HepG2 (cell line): ENCODE measurements at regions of chr4 and their contacts with region 1.

Region 1: DNA sequence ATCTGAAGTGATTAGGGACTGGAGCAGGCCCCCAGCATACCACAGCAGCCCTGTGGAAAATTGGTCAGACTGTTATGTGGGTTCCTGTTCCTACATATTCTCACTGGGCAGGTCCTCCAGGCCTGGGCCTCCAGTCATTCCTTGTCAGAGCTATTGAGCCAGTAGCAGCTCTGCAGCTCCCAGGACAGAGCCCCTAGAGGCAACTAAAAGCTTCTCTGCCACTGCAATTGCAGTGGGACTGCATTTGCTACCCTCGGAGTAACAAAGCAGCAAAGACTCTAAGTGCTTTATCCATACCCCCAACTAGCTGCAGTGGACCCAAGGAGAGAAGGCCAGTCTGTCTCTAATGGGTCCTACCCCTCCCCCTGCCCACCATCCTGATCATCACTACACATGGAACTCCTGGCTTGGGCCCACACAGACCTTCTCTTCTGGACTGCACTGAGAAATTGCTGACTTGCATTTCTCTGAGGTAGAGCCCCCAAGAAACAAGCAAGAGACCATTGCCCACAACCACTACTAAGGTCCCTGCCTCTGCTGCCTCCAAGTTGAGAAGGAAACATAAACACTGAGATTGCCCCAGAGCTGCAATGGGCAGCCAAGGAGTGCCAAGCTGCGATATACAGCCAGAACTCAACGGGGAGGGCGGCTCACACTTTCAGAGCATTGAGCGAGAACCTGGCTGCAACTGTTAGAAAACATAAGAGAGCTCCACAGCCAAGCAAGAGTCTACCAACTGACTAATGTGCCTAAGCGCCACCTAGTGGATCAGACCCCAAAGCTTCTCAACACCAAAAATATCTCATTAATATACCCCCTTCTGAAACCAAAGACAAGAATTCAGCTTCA is 738.7 kb upstream of the NDST4 start:
- DNase-seq: peak; percentile 53
- ATAC-seq: peak; percentile 94
- H3K4me3 ChIP-seq: no peak overlapping the region
- H3K27ac ChIP-seq: no peak overlapping the region
- H3K4me1 ChIP-seq: no peaks in the 10 kb centered on the region
- H3K27me3 ChIP-seq: no peaks in the 10 kb centered on the region
- CTCF ChIP-seq: peak; percentile 61
- EP300 ChIP-seq: no peak
- POLR2A ChIP-seq: no peak
- RAD21 ChIP-seq: 0 out of 2 replicates have a peak, but pooled peaks have one; percentile 15

Region 2: GRCh38 chr4:115090483-115091075 is 761.6 kb before region 1 on chr4:
- CTCF ChIA-PET with region 1: interaction called, 3 read pairs
- POLR2A ChIA-PET with region 1: no interaction called
- in situ Hi-C with region 1: loop called (anchors 25 kb)
- intact Hi-C with region 1: loop called (anchors 1 kb)
- DNase-seq: peak; percentile 24
- ATAC-seq: 0 out of 3 replicates have a peak, but pooled peaks have one; percentile 51
- H3K4me3 ChIP-seq: no peak overlapping the region
- H3K27ac ChIP-seq: no peak overlapping the region
- H3K4me1 ChIP-seq: no peaks in the 10 kb centered on the region
- H3K27me3 ChIP-seq: no peaks in the 10 kb centered on the region
- CTCF ChIP-seq: peak; percentile 53
- EP300 ChIP-seq: no peak
- POLR2A ChIP-seq: no peak
- RAD21 ChIP-seq: no peak